HCT116 (cell line): ENCODE measurements at regions of chr16 and their contacts with region 1.

Region 1: GRCh38 chr16:19419691-19420060 is 2.0 kb downstream of the TMC5 start:
- DNase-seq: peak; percentile 94
- ATAC-seq: peak; percentile 86
- H3K4me3 ChIP-seq: peak overlapping the region in 1 of 2 experiments; percentile 39; a peak in 3 of 4 replicates
- H3K27ac ChIP-seq: peak overlapping the region; percentile 73
- H3K4me1 ChIP-seq: peaks cover 20 to 63% of the 10 kb centered on the region in 2 experiments
- H3K27me3 ChIP-seq: no peaks in the 10 kb centered on the region
- CTCF ChIP-seq: no peak
- POLR2A ChIP-seq: no peak
- RAD21 ChIP-seq: peak; percentile 23; the same call in 1 of the 2 replicates

Region 2: GRCh38 chr16:19348578-19349315 is 70.9 kb before region 1 on chr16:
- CTCF ChIA-PET with region 1: no interaction called
- POLR2A ChIA-PET with region 1: no interaction called
- RAD21 ChIA-PET with region 1: no interaction called
- intact Hi-C with region 1: no loop called
- DNase-seq: no peak
- ATAC-seq: no peak
- H3K4me3 ChIP-seq: no peak overlapping the region
- H3K27ac ChIP-seq: no peak overlapping the region
- H3K4me1 ChIP-seq: no peaks in the 10 kb centered on the region
- H3K27me3 ChIP-seq: no peaks in the 10 kb centered on the region
- CTCF ChIP-seq: no peak
- POLR2A ChIP-seq: no peak
- RAD21 ChIP-seq: no peak

Region 3: DNA sequence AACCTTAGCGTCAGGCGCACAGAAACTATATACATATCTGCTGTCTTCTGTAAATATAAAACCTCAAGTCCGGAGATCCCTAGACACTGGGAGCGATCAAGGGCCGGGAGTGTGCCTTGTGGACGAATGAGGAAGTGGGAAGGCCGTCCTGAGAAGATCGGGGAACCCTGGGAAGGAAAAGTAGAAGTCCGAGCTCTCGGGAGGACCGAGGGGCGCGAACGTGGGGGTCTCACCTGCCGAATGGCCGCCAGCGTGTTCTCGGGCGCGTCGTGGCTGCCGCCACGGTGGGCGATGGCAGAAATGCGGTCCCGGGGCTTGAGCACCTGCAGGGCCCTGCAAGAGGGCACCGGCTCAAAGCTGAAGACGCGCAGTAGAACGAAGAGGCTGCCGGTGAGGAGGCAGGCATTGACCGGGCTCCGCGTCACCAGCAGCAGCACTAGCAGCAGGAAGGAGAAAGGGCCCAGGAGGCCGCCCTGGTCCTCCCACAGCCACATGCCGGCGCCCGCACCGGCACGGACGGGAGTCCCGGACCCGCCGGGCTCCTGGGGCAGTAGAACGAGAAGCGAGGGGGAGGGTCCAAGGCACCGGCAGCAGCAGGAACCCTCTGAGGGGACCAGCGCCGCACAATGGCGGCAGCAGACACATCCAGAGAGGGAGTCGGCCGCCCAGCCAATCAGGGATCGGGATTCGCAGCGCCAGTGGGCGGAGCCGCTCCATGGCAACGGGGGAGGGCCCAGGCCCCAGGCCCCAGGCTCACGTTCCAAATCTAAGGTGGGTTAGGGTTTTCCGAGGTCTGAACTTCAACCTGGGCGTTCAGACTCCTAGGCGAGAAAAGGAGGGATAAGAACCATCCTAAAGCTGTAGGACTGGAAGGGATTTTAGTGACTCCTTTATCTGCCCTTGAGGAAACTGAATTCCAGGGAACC is 102.1 kb after region 1 on chr16 and contains the start of gene GDE1:
- CTCF ChIA-PET with region 1: no interaction called
- POLR2A ChIA-PET with region 1: no interaction called
- RAD21 ChIA-PET with region 1: no interaction called
- intact Hi-C with region 1: loop called (anchors 5 kb)
- DNase-seq: peak; percentile 69
- ATAC-seq: peak; percentile 83
- H3K4me3 ChIP-seq: peak within 1 kb of the TSS; percentile 65 to 87
- H3K27ac ChIP-seq: peak within 1 kb of the TSS; percentile 84
- H3K4me1 ChIP-seq: peaks cover 17 to 48% of the 10 kb centered on the region in 2 experiments
- H3K27me3 ChIP-seq: no peaks in the 10 kb centered on the region
- CTCF ChIP-seq: peak in 2 of 3 experiments; percentile 21 to 29; a peak in 2 of 6 replicates
- POLR2A ChIP-seq: peak; percentile 77
- RAD21 ChIP-seq: no peak
- total RNA-seq, gene GDE1: 47.1 TPM